B cell (primary cell): ENCODE measurements at regions of chr19 and their contacts with region 1.

Region 1: DNA sequence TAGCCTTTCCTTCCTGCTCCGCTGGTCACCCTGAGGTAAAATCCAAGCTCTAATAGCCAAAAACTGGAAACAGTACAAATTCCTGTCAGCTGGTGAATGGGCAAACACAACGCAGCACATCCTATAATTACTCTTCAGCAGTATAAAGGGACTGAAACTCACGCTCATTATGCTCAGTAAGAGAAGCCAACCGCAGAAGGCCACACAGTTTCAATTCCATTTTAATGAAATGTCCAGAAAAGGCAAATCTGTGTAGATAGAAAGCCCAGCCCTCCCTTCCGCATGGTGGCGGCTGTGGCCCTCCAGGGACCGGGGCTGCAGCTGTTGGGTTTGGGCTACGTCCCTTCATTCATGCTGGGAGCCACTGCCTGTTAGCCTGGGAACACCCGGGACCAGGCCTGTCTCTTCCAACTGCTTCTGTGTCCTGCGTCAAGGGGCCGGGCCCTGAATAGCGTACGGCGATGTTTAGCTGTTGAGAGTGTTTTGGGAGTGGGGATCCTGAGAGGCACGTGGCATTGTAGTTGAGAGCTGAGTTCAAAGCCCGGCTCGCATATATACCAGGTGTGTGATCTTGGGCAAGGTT is 23.5 kb downstream of the NKPD1 start:
- DNase-seq: peak; percentile 54
- ATAC-seq: peak; percentile 73
- H3K4me3 ChIP-seq: peak overlapping the region in 1 of 5 experiments; percentile 29
- H3K4me3 Mint-ChIP-seq: peak overlapping the region; percentile 83
- H3K27ac ChIP-seq: peak overlapping the region; percentile 18 to 28
- H3K27ac Mint-ChIP-seq: peak overlapping the region; percentile 78
- H3K4me1 ChIP-seq: peaks cover 42 to 52% of the 10 kb centered on the region in 2 donors
- H3K4me1 Mint-ChIP-seq: peaks cover 45% of the 10 kb centered on the region
- H3K27me3 ChIP-seq: no peaks in the 10 kb centered on the region
- H3K27me3 Mint-ChIP-seq: no peaks in the 10 kb centered on the region
- CTCF ChIP-seq: no peak

Region 2: GRCh38 chr19:45117669-45118068 is 19.6 kb before region 1 on chr19:
- CTCF ChIA-PET with region 1: no interaction called
- POLR2A ChIA-PET with region 1: no interaction called
- intact Hi-C with region 1: no loop called
- DNase-seq: no peak
- ATAC-seq: no peak
- H3K4me3 ChIP-seq: no peak overlapping the region
- H3K4me3 Mint-ChIP-seq: peak overlapping the region; percentile 71
- H3K27ac ChIP-seq: no peak overlapping the region
- H3K27ac Mint-ChIP-seq: peak overlapping the region; percentile 15
- H3K4me1 ChIP-seq: peaks cover 45 to 84% of the 10 kb centered on the region in 2 donors
- H3K4me1 Mint-ChIP-seq: peaks cover 79% of the 10 kb centered on the region
- H3K27me3 ChIP-seq: no peaks in the 10 kb centered on the region
- H3K27me3 Mint-ChIP-seq: no peaks in the 10 kb centered on the region
- CTCF ChIP-seq: no peak

Region 3: DNA sequence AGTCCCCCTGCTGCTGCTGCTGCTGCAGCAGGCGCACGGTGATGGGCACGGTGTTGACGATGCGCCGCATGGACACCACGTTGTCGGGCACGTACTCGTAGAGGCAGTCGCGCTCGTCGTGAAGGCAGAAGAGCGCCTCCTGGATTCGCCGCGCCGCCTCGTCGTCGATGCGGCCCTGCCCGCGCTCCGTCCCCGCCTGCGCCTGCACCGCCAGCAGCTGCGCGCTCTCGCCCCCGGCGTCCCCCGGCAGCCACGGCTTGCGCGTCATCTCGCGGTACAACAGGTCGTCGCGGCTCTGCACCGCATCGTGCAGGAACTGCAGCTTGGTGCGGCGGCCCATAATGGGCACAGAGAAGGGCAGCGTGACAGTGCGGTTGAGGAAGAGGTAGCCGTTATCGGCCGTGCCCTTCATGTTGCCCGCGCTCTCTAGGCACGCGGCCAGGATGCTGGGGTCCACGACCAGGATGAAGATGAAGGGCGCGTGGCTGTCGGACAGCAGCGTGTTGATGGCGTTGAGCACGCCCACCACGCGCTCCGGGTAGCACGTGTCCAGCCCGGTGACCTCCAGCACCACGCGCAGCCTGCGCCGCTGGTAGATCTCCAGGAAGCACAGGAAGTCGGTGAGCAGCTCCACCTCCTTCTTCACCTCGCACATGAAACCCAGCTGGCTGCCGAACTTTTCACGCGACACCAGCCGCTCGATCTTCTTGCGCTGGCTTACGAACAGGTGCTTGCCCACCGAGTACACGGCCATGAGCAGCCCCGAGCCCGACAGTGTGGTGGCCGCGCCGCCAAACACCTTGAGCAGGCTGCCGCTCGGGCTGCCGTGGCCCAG is 15.5 kb after region 1 on chr19:
- CTCF ChIA-PET with region 1: interaction called, 3 read pairs
- POLR2A ChIA-PET with region 1: no interaction called
- intact Hi-C with region 1: loop called (anchors 2 kb)
- DNase-seq: peak; percentile 70
- ATAC-seq: peak; percentile 64
- H3K4me3 ChIP-seq: peak overlapping the region in 4 of 5 experiments; percentile 38 to 51 (median 48)
- H3K4me3 Mint-ChIP-seq: peak overlapping the region; percentile 90
- H3K27ac ChIP-seq: no peak overlapping the region
- H3K27ac Mint-ChIP-seq: peak overlapping the region; percentile 70
- H3K4me1 ChIP-seq: peaks cover 22 to 29% of the 10 kb centered on the region in 2 donors
- H3K4me1 Mint-ChIP-seq: peaks cover 18% of the 10 kb centered on the region
- H3K27me3 ChIP-seq: peaks cover 0 to 42% (median 12%) of the 10 kb centered on the region in 4 experiments
- H3K27me3 Mint-ChIP-seq: peaks cover 27% of the 10 kb centered on the region
- CTCF ChIP-seq: no peak